PC-9 (cell line): ENCODE measurements at regions of chr3 and their contacts with region 1.

Region 1: DNA sequence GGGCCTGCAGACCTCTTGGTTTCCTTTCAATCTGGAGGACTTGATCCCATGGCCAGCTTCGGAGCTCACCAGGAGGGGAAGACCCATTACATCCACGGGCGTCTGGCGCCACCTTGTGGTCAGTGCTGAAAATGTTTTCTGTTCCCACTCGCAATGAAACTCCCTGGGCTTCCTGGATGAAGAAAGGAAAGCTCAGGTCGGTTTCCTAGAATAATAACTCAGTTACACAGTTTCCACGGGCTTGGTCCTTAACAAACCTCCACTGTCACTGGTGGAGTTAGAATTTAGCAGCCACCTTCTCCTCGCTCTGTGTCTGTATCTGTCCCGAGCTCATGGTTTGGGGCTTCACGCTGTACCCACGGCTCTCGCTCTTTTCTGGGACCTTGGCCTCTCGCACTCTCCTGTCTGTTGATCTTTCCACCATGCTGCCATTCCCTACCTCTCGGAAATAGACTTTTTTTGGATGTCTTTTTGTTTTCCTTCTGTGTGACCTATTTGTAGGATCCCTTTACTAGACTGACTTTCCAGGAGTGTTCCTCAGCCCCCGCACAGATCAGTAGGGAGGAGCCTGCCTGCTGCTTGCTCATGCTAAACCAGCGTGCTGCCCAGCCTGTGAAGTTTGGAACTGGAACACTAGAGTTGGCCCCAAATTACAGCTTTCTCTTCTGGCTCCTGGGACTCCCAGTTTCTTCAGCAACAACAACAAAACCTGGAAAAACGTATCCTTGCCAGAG is 56.3 kb downstream of the IL20RB start:
- DNase-seq: peak; percentile 66 to 88
- H3K4me3 ChIP-seq: no peak overlapping the region
- H3K27ac ChIP-seq: no peak overlapping the region
- H3K4me1 ChIP-seq: no peaks in the 10 kb centered on the region
- H3K27me3 ChIP-seq: no peaks in the 10 kb centered on the region
- CTCF ChIP-seq: peak; percentile 93

Region 2: GRCh38 chr3:136305878-136306277 is 708.2 kb before region 1 on chr3:
- CTCF ChIA-PET with region 1: interaction called, 9 read pairs
- POLR2A ChIA-PET with region 1: no interaction called
- intact Hi-C with region 1: loop called (anchors 1 kb)
- DNase-seq: peak; percentile 7 to 36
- H3K4me3 ChIP-seq: no peak overlapping the region
- H3K27ac ChIP-seq: no peak overlapping the region
- H3K4me1 ChIP-seq: no peaks in the 10 kb centered on the region
- H3K27me3 ChIP-seq: no peaks in the 10 kb centered on the region
- CTCF ChIP-seq: peak; percentile 75

Region 3: DNA sequence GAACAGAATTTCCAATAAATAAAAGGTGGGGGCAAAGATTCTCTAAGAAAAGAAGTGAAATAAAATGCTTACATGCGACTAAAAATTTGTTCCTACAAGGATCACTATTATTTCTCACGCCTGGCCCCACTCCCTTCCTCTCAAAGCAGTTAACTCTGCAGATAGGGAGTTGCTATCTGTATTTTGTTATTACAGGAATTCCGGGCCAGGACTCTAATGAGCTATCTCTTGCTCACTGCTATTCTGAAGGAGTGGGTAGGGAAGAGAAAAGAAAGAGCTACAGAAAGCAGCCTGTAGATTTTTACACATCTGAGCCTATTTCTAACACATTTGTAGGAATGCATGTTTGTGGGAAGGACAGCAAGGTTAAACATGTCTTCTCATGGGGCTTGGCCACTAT is 623.5 kb before region 1 on chr3:
- CTCF ChIA-PET with region 1: interaction called, 4 read pairs
- POLR2A ChIA-PET with region 1: no interaction called
- intact Hi-C with region 1: loop called (anchors 1 kb)
- DNase-seq: no peak
- H3K4me3 ChIP-seq: no peak overlapping the region
- H3K27ac ChIP-seq: no peak overlapping the region
- H3K4me1 ChIP-seq: no peaks in the 10 kb centered on the region
- H3K27me3 ChIP-seq: no peaks in the 10 kb centered on the region
- CTCF ChIP-seq: no peak

Region 4: GRCh38 chr3:136545664-136546268 is 468.4 kb before region 1 on chr3:
- CTCF ChIA-PET with region 1: interaction called, 3 read pairs
- POLR2A ChIA-PET with region 1: no interaction called
- intact Hi-C with region 1: loop called (anchors 1 kb)
- DNase-seq: no peak
- H3K4me3 ChIP-seq: no peak overlapping the region
- H3K27ac ChIP-seq: no peak overlapping the region
- H3K4me1 ChIP-seq: 0 out of 2 replicates have a peak, but pooled peaks cover 4% of the 10 kb centered on the region
- H3K27me3 ChIP-seq: no peaks in the 10 kb centered on the region
- CTCF ChIP-seq: peak; percentile 40; the same call in 1 of the 2 replicates

Region 5: DNA sequence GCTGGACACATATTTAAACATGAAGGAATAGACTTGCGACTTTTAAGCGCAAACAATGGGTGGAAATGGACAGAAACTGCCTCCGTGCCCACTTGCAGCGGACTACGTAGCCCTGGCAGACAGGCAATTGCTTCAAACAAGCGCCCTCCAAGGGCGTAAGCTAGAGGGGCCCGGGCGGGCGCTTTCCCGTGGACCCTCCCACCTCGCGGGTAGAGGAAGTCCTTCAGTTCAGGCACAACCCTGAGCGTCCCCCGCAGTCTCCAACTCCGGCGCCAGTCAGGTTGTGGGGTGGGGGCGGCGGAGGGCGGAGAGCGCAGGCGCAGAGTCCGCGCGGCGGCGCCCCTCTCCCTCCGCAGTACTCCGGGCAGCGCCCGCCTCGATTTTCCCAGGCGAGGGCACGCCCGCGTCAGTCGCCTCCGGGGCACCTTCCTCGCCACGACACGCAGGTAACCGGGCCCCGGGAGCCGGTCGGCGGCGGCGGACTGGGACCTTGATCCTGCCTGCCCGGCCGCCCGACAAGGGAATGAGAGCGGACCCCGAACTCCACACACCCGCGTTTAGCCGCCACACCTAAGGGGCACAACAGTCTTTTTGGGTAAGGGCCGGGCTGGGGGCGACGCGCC is 195.2 kb before region 1 on chr3 and contains the start of gene SLC35G2:
- CTCF ChIA-PET with region 1: no interaction called
- POLR2A ChIA-PET with region 1: no interaction called
- intact Hi-C with region 1: loop called (anchors 2 kb)
- DNase-seq: peak in 1 of 2 experiments; percentile 40
- H3K4me3 ChIP-seq: peak within 1 kb of the TSS; percentile 67
- H3K27ac ChIP-seq: peak within 1 kb of the TSS; percentile 53
- H3K4me1 ChIP-seq: peaks cover 19% of the 10 kb centered on the region
- H3K27me3 ChIP-seq: no peaks in the 10 kb centered on the region
- CTCF ChIP-seq: 0 out of 2 replicates have a peak, but pooled peaks have one; percentile 17
- total RNA-seq, gene SLC35G2: 3.1 and 5.0 TPM in 2 replicates

Region 6: DNA sequence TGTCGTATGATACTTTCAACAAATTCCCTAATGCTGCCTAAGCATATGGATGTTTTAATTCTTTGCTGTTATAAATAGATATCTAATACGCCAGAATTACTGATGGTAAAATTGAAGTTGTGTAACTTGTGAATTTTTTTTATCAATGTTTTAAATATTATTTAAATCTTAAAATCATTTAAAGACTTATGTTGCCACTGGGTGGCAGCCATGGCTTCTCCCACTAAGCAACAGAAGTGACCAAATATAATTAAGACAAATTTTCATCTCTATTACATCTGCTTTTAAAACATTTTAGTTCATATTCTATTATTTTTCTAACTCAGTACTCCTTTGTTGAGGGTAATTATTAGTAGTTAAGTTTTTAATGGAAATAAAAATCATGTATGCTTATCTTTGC is 64.4 kb before region 1 on chr3:
- CTCF ChIA-PET with region 1: interaction called, 4 read pairs
- POLR2A ChIA-PET with region 1: no interaction called
- intact Hi-C with region 1: loop called (anchors 1 kb)
- DNase-seq: no peak
- H3K4me3 ChIP-seq: no peak overlapping the region
- H3K27ac ChIP-seq: no peak overlapping the region
- H3K4me1 ChIP-seq: peaks cover 29% of the 10 kb centered on the region
- H3K27me3 ChIP-seq: no peaks in the 10 kb centered on the region
- CTCF ChIP-seq: peak; percentile 53